Transverse colon (tissue), 4 donors: ENCODE measurements at regions of chr1 and their contacts with region 1.

Region 1: GRCh38 chr1:9269078-9269501 is 23.6 kb upstream of the SPSB1 start:
- DNase-seq: no peak
- H3K4me3 ChIP-seq: no peak overlapping the region
- H3K27ac ChIP-seq: no peak overlapping the region
- H3K4me1 ChIP-seq: peaks cover 0 to 17% (median 10%) of the 10 kb centered on the region in 4 donors
- H3K27me3 ChIP-seq: no peaks in the 10 kb centered on the region
- CTCF ChIP-seq: no peak
- EP300 ChIP-seq: no peak
- POLR2A ChIP-seq: no peak

Region 2: DNA sequence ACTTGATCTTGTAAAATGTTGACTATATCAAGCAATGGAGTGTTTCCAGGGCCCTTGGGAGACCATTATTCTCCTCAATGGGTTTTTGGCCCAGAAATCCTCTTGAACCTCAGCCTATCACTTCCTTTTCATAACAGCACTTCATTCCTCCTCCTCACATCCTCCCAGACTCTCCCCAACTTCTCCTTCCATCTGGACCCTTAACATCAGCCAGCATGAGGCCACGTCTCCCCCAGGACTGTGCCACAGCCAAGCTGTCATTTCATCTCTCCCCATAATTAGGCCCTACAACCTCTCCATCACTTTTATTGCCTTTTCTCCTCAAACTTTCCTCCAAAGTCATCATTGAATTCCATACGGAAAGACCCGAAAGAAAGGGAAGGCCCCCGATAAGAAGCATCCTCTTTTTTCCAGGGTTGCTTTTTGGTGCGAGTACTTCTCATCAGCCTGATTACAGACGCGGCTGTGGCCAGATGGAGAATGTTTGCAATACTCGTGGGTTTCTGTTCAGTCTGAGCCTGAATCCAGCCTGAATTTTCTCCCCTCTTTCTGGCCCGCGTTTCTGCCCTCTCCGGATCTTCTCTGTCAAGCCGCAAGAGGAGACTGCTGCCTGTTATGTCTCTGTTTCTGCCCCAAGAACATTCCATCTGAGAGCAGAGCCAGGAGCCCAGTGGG is 217.5 kb after region 1 on chr1:
- in situ Hi-C with region 1: no loop called
- intact Hi-C with region 1: loop called (anchors 5 kb)
- DNase-seq: no peak
- H3K4me3 ChIP-seq: no peak overlapping the region
- H3K27ac ChIP-seq: no peak overlapping the region
- H3K4me1 ChIP-seq: peaks cover 0 to 5% (median 1%) of the 10 kb centered on the region in 4 donors
- H3K27me3 ChIP-seq: no peaks in the 10 kb centered on the region
- CTCF ChIP-seq: no peak
- EP300 ChIP-seq: no peak
- POLR2A ChIP-seq: no peak